Activated CD4-positive, alpha-beta memory T cell treated with anti-CD3 and anti-CD28 coated beads for 36 hours (primary cell): ENCODE measurements at regions of chr2 and their contacts with region 1.

Region 1: DNA sequence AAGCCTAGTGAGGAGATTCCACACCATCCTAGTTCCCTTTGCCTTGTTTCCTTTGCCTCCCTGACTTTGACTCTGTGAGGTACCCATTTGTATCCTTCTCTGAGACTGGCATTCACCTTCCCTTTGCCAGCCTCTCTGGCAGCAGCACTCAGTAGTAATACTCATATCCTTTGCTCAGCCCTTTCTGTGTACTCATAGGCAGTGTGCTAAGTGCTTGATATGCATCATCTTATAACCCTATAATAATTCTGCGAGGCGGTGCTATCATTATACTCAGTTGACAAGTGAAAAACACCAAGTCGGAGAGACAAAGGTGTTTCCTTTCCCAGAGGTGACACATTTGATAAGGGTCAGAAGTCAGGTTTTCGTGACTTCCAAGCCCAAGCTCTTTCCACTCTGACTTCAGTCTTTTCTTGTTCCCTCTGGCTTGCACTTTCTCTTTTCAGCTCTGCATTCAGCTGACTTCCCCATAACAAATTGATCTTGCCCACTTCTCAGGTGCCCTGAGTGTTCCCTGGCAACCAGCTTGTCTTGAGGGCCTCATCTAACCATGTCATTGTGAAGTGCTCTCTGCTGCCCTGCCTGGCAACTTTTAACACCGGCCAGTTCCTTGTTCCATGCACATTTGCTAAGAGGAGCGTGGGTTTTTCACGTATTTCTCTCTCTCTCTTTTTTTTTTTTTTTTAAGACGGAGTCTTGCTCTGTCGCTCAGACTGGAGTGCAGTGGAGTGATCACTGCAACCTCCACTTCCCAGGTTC is 94.5 kb upstream of the UPP2 start:
- DNase-seq: peak; percentile 25
- H3K4me3 Mint-ChIP-seq: no peak overlapping the region
- H3K27ac Mint-ChIP-seq: no peak overlapping the region
- H3K4me1 Mint-ChIP-seq: peaks cover 6% of the 10 kb centered on the region
- H3K27me3 Mint-ChIP-seq: peaks cover 2% of the 10 kb centered on the region

Region 2: DNA sequence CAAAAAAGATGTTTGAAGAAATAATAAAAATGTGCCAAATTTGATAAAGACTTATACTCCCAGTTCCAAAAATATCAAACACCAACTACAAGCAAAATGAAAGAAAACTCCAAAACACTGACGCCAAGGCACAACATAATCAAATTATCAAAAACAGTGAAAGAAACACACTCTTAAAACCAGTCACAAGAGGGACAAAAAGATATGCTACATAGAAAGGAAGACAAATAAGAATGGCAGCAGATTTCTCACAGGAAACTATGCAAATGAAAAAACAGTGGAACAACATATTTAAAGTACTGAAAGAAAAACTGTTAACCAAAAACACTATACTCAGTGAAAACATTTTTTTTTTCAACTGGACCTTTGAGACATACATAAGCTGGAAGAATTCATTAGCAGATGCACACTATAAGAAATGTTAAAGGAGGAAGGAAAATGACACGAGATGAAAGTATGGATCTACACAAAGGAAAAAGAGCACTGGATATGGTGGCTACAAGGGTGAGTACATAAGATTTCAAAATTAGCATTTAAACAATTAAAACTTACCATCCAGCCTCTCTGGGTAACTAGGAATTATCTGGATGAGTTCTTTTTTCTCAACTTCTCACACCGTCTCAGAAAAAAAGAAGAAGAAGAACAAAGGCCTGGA is 284.4 kb before region 1 on chr2:
- CTCF ChIA-PET with region 1: no interaction called
- POLR2A ChIA-PET with region 1: no interaction called
- intact Hi-C with region 1: no loop called
- DNase-seq: no peak
- H3K4me3 Mint-ChIP-seq: no peak overlapping the region
- H3K27ac Mint-ChIP-seq: no peak overlapping the region
- H3K4me1 Mint-ChIP-seq: no peaks in the 10 kb centered on the region
- H3K27me3 Mint-ChIP-seq: no peaks in the 10 kb centered on the region

Region 3: GRCh38 chr2:157777427-157777826 is 229.7 kb before region 1 on chr2:
- CTCF ChIA-PET with region 1: interaction called, 25 read pairs
- POLR2A ChIA-PET with region 1: no interaction called
- intact Hi-C with region 1: loop called (anchors 1 kb)
- DNase-seq: peak; percentile 61
- H3K4me3 Mint-ChIP-seq: no peak overlapping the region
- H3K27ac Mint-ChIP-seq: no peak overlapping the region
- H3K4me1 Mint-ChIP-seq: peaks cover 12% of the 10 kb centered on the region
- H3K27me3 Mint-ChIP-seq: no peaks in the 10 kb centered on the region

Region 4: DNA sequence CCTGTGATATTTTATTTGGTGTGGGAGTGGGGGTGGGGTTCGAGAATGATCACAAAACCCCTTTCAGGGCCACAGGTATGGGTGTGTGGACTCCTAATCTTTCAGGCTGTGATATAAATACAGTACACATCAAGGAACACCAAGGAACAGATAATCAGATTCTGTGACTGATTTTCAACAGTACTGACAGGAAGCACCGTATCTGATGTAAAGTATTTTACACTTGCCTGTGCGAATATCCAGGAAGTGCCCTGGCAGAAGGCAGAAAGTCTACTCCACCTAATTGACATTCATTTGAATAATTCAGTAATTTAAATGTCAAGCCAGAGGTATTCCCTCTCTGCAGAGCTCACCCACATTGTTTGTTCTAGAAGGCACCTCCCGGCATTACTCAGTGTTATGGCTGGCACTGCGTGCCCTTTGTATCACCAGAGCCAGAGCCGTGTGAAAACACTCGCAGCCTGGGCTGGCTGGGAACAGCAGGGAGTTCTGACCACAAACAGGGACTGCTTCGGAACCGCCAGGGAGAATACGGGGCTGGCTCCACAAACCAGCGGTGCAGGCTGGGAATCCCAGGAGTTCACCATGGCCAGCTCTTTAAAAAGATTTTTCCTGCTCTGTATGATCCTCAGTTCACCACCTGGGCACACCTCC is 222.8 kb before region 1 on chr2:
- CTCF ChIA-PET with region 1: interaction called, 10 read pairs
- POLR2A ChIA-PET with region 1: no interaction called
- intact Hi-C with region 1: no loop called
- DNase-seq: peak; percentile 26
- H3K4me3 Mint-ChIP-seq: no peak overlapping the region
- H3K27ac Mint-ChIP-seq: peak overlapping the region; percentile 61
- H3K4me1 Mint-ChIP-seq: peaks cover 45% of the 10 kb centered on the region
- H3K27me3 Mint-ChIP-seq: no peaks in the 10 kb centered on the region